GM10248 (cell line): ENCODE measurements at regions of chr12 and their contacts with region 1.

Region 1: GRCh38 chr12:57881475-57881874 is 34.9 kb upstream of the CTDSP2 start:
- DNase-seq: no peak
- CTCF ChIP-seq: no peak

Region 2: DNA sequence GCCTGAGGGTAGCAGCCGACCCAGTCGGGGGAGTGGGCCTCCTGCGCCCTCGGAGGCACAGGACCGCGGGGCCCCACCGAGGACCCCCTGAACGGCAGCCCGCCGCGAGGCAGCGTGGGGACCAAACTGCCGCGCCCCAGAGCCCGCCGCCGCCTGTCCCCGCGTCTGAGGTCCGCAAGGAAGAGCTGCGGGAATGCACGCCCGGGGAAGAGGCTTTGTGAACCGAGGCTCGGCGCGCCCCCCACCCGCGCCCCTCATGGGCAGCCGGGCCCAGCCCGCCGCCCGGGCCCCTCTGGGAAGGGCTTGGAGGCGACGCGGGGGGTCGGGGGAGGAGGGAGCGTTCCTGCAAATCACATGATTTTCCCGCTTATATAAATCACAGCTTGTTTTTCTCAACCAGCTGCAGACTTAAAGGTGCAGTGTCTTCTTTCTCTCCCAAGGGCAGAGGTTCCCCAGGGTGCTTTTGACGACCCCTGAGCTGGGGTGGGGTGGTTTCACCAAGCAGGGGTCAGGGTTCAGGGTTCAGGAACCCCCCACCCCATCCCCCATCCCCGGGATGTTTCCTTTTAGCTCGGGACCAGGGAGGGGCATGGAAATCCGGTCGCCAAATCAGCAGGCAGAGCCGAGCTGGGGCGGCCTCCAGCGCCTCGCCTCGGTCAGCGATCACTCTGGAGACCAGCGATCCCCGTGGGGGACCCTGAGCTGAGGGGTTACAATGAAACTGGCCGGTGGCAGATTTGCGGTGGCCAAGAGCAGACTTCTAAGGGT is 15.1 kb after region 1 on chr12:
- CTCF ChIA-PET with region 1: interaction called, 15 read pairs
- POLR2A ChIA-PET with region 1: no interaction called
- DNase-seq: no peak
- CTCF ChIP-seq: no peak